WTC11 (cell line): ENCODE measurements at regions of chr22 and their contacts with region 1.

Region 1: GRCh38 chr22:38114484-38115398 is 4.3 kb upstream of the BAIAP2L2 start:
- DNase-seq: peak; percentile 95
- ATAC-seq: peak; percentile 90
- H3K4me3 Mint-ChIP-seq: no peak overlapping the region
- H3K27ac Mint-ChIP-seq: 0 out of 2 replicates have a peak overlapping the region, but pooled peaks have one; percentile 27
- H3K4me1 Mint-ChIP-seq: peaks cover 7% of the 10 kb centered on the region
- H3K27me3 Mint-ChIP-seq: no peaks in the 10 kb centered on the region; the same call in 1 of the 2 replicates
- CTCF ChIP-seq: peak; percentile 95

Region 2: GRCh38 chr22:37824674-37825641 is 289.8 kb before region 1 on chr22:
- CTCF ChIA-PET with region 1: no interaction called
- POLR2A ChIA-PET with region 1: no interaction called
- DNase-seq: peak; percentile 63
- ATAC-seq: peak; percentile 68
- H3K4me3 Mint-ChIP-seq: peak overlapping the region; percentile 57
- H3K27ac Mint-ChIP-seq: no peak overlapping the region
- H3K4me1 Mint-ChIP-seq: peaks cover 28% of the 10 kb centered on the region
- H3K27me3 Mint-ChIP-seq: peaks cover 51% of the 10 kb centered on the region
- CTCF ChIP-seq: no peak

Region 3: DNA sequence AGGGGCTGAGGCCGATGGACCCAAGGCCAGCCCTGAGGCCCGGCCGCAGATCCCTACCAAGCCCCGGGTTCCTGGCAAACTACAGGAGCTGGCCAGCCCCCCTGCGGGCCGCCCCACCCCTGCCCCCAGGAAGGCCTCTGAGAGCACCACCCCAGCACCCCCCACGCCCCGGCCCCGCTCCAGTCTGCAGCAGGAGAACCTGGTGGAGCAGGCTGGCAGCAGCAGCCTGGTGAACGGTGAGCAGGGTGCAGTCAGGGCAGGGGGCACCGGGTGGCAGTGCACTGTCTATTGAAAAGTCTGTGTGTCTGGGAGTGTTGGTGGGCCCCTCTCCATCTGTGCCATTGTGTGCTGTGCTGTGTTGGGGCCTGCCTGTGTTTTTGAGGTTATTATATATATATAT is 192.6 kb before region 1 on chr22:
- CTCF ChIA-PET with region 1: no interaction called
- POLR2A ChIA-PET with region 1: no interaction called
- DNase-seq: no peak
- ATAC-seq: peak; percentile 14; the same call in 1 of the 2 replicates
- H3K4me3 Mint-ChIP-seq: no peak overlapping the region
- H3K27ac Mint-ChIP-seq: no peak overlapping the region
- H3K4me1 Mint-ChIP-seq: no peaks in the 10 kb centered on the region
- H3K27me3 Mint-ChIP-seq: no peaks in the 10 kb centered on the region
- CTCF ChIP-seq: no peak

Region 4: DNA sequence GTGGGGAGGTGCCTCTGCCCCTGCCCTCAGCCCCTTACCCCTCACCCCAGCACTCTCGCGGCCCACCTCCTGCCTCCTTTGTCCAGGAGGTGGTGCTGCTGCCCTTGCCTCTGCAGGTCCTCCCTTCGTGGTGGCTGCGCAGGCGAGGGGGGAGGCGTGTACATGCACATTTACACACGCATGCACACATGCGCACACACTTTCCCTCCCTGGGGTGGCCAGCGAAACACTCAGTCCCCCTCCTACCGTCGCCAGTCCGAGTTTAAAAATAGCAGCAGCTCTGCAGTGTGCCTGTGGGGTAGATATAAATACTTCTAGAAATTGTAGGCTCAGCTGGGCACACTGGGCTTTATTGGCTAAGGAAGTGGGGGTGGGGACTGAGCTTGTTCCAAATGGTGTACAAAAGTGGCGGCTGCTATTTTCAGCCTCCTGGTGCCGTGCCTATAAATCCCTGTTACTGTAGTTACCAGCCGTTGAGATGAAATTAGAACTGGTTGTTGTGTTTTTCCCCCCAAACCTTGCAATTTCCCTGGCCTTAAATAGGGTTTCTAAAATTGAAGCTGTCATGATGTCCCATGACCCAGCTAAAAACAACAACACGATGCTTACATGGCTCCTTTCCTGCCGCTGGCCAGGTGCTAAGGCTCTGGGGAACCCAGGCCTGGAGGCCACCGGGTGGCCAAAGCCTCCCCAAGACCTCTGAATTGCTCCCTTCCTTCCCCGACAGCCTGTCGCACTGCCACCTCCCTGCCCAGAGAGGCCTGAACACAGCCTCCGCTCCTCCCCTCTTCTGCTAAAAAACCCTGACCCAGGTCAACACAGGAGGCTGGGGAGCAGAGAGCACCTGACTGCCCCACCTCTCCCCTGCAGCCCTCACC is 45.1 kb before region 1 on chr22:
- CTCF ChIA-PET with region 1: interaction called, 12 read pairs
- POLR2A ChIA-PET with region 1: interaction called, 4 read pairs
- DNase-seq: peak; percentile 58
- ATAC-seq: peak; percentile 66
- H3K4me3 Mint-ChIP-seq: no peak overlapping the region
- H3K27ac Mint-ChIP-seq: peak overlapping the region; percentile 45; the same call in 1 of the 2 replicates
- H3K4me1 Mint-ChIP-seq: peaks cover 2% of the 10 kb centered on the region; the same call in 1 of the 2 replicates
- H3K27me3 Mint-ChIP-seq: no peaks in the 10 kb centered on the region
- CTCF ChIP-seq: peak; percentile 25; the same call in 1 of the 2 replicates

Region 5: DNA sequence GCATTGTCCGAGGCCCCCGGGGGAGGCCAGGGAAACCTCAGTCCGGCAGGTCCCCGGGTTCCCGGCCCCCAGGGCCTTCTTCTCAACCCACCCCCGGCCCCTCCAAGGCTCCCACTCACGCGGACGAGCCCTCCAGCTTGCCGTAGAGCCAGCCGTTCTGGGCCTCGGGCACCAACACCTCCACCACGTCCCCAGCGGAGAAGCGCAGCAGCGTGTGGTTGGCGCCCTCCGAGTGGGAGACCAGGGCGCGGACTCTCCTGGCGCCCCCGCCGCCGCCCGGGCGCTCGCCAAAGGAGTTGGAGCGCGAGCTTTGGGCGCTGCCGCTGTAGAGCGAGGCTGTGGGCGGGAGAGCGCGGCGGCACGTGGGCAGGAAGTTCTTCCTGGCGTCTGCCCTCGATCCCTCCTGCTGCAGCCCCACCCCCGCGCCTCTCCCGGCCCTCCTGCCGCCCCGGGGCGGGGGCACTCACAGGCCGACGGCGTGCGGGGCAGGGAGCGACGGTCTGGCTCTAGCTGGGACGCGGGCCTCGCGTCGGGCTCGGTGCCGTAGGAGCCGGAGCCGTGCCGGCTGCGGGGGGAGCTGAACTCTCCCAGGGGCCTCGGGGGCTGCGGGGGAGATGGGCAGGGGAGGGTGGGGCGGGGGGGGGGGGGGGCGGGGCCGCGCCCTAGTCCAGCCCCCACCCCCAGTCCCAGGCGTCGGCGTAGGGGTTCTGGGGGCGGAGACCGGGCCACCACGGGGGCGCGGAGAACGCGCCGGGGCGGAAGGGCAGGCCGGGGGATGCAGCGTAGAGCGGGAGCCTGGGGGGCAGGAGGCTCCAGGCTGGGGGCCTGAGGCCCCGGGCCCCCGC is 25.9 kb before region 1 on chr22:
- CTCF ChIA-PET with region 1: interaction called, 18 read pairs
- POLR2A ChIA-PET with region 1: no interaction called
- DNase-seq: no peak
- ATAC-seq: peak; percentile 13; the same call in 1 of the 2 replicates
- H3K4me3 Mint-ChIP-seq: no peak overlapping the region
- H3K27ac Mint-ChIP-seq: no peak overlapping the region
- H3K4me1 Mint-ChIP-seq: peaks cover 5% of the 10 kb centered on the region; the same call in 1 of the 2 replicates
- H3K27me3 Mint-ChIP-seq: no peaks in the 10 kb centered on the region
- CTCF ChIP-seq: no peak

Region 6: GRCh38 chr22:38143036-38143697 is 28.4 kb after region 1 on chr22:
- CTCF ChIA-PET with region 1: interaction called, 45 read pairs
- POLR2A ChIA-PET with region 1: no interaction called
- DNase-seq: no peak
- ATAC-seq: no peak
- H3K4me3 Mint-ChIP-seq: no peak overlapping the region
- H3K27ac Mint-ChIP-seq: peak overlapping the region; percentile 43
- H3K4me1 Mint-ChIP-seq: peaks cover 9% of the 10 kb centered on the region
- H3K27me3 Mint-ChIP-seq: no peaks in the 10 kb centered on the region
- CTCF ChIP-seq: no peak

Region 7: GRCh38 chr22:38176170-38176741 is 61.5 kb after region 1 on chr22:
- CTCF ChIA-PET with region 1: interaction called, 23 read pairs
- POLR2A ChIA-PET with region 1: no interaction called
- DNase-seq: no peak
- ATAC-seq: no peak
- H3K4me3 Mint-ChIP-seq: no peak overlapping the region
- H3K27ac Mint-ChIP-seq: no peak overlapping the region
- H3K4me1 Mint-ChIP-seq: peaks cover 30% of the 10 kb centered on the region
- H3K27me3 Mint-ChIP-seq: no peaks in the 10 kb centered on the region
- CTCF ChIP-seq: no peak

Region 8: GRCh38 chr22:38214256-38215056 is 99.7 kb after region 1 on chr22:
- CTCF ChIA-PET with region 1: interaction called, 16 read pairs
- POLR2A ChIA-PET with region 1: interaction called, 4 read pairs
- DNase-seq: peak; percentile 89
- ATAC-seq: peak; percentile 81
- H3K4me3 Mint-ChIP-seq: peak overlapping the region; percentile 68
- H3K27ac Mint-ChIP-seq: peak overlapping the region; percentile 70; the same call in 1 of the 2 replicates
- H3K4me1 Mint-ChIP-seq: peaks cover 23% of the 10 kb centered on the region
- H3K27me3 Mint-ChIP-seq: peaks cover 29% of the 10 kb centered on the region
- CTCF ChIP-seq: no peak